ENCODE measurements at regions of chr1 and their contacts with region 1.

Region 1: DNA sequence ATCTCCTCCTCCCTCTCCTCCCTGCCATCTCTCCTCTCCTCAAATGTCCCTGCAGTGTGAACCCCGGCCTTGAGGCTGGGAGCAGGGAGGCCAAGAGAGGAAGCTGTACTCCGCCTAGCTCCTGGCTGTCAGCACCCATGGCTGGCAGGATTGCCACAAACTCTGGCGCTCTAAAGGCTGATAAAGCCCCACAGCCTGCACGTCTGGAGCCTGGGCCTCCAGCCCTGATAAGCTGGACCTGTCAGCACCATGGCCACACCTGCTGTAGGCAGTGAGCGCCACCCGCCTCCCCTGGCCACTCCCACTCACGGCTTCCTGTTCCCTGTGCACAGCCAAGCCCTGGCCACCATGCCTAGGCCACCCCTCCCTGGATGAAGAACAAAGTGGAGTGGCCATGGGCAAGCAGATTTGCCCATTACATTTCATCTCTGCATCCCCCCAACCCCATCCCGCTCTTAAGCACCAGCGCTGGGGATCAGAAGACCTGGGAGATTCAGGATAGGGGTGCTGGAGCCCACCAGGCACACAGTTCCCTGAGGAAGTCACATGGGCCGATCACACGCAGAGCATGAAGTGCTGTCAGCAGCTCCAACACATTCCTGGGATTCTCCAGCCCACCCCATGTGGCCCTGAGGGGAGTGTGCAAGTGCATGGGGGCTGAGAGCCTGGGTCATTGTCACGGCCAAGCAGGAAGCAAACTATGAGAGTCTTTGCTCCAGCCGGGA is 24.2 kb upstream of the NPPB start:
- DNase-seq: peak; percentile 78
- H3K4me3 ChIP-seq: no peak overlapping the region
- H3K27ac ChIP-seq: peak overlapping the region in 1 of 2 experiments; percentile 99; a peak in 2 of 4 replicates
- H3K4me1 ChIP-seq: peaks cover 0 to 57% of the 10 kb centered on the region in 2 experiments; a peak in 2 of 4 replicates
- H3K27me3 ChIP-seq: no peaks in the 10 kb centered on the region
- CTCF ChIP-seq: no peak
- EP300 ChIP-seq: peak in 1 of 2 experiments; percentile 51; a peak in 2 of 4 replicates
- RAD21 ChIP-seq: no peak

Region 2: GRCh38 chr1:11845641-11846335 is 37.2 kb before region 1 on chr1:
- CTCF ChIA-PET with region 1: interaction called, 48 read pairs
- POLR2A ChIA-PET with region 1: interaction called, 15 read pairs
- DNase-seq: peak; percentile 57
- H3K4me3 ChIP-seq: no peak overlapping the region
- H3K27ac ChIP-seq: peak overlapping the region in 1 of 2 experiments; percentile 56; a peak in 2 of 4 replicates
- H3K4me1 ChIP-seq: peaks cover 0 to 52% of the 10 kb centered on the region in 2 experiments; a peak in 2 of 4 replicates
- H3K27me3 ChIP-seq: no peaks in the 10 kb centered on the region
- CTCF ChIP-seq: no peak
- EP300 ChIP-seq: no peak
- RAD21 ChIP-seq: no peak

Region 3: GRCh38 chr1:11893907-11894251 is 10.9 kb after region 1 on chr1:
- CTCF ChIA-PET with region 1: interaction called, 26 read pairs
- POLR2A ChIA-PET with region 1: no interaction called
- DNase-seq: peak; percentile 90
- H3K4me3 ChIP-seq: peak overlapping the region in 1 of 2 experiments; percentile 39; a peak in 1 of 4 replicates
- H3K27ac ChIP-seq: no peak overlapping the region
- H3K4me1 ChIP-seq: peaks cover 0 to 5% of the 10 kb centered on the region in 2 experiments; a peak in 1 of 4 replicates
- H3K27me3 ChIP-seq: 0 out of 2 replicates have a peak, but pooled peaks cover 6% of the 10 kb centered on the region
- CTCF ChIP-seq: peak; percentile 93
- EP300 ChIP-seq: no peak
- RAD21 ChIP-seq: peak; percentile 93

Measured in SK-N-SH (cell line).